PC-9 (cell line): ENCODE measurements at regions of chr7 and their contacts with region 1.

Region 1: DNA sequence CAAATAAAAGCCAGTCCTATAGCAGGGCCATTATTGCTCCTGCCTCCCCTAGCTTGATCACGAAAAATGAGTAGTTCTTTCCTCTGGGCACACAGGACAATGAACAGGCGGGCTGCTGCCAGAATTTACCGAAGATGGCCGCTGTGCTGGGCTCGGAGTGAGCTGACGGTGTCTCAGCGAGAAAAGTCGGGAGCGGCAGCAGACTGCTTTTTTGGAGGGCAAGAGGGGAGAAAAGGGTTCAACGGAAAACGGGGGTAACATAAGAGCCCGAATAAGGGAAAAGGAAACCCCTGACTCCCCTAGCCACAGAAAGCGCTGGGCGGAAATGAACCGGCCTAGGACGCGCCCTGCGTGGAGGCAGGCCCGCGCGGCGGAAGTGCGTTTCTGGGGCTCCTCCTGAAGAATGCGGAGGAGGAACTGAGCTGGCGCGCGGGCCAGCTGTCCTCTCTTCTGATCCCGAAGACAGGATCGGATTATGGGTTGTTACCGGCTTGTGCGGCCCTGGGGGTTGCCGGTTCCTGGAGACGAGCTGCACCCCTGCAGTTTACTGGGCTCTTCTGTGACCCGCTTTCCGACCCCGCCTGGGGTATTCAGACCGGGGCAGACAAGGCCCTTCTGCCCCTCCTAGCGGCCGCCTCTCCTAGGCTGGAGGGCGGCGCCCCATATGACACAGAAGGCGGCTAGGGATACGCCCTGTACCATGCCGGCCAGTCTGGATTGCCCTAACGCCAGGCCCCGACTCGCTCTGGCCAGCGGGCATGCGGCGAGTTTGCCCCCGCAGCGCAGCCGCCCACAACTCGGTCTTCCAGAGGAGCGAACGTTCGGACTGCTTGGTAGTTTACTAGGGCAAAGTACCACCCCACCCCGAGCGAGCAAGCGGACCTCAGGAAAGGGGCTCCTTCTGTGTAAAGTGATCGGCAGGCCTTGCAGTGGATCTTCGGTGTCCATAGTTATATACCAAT is 30.1 kb upstream of the KMT2E start:
- DNase-seq: peak; percentile 76 to 88
- H3K4me3 ChIP-seq: peak overlapping the region; percentile 69
- H3K27ac ChIP-seq: peak overlapping the region; percentile 72
- H3K4me1 ChIP-seq: peaks cover 35% of the 10 kb centered on the region
- H3K27me3 ChIP-seq: no peaks in the 10 kb centered on the region
- CTCF ChIP-seq: peak; percentile 39; the same call in 1 of the 2 replicates

Region 2: DNA sequence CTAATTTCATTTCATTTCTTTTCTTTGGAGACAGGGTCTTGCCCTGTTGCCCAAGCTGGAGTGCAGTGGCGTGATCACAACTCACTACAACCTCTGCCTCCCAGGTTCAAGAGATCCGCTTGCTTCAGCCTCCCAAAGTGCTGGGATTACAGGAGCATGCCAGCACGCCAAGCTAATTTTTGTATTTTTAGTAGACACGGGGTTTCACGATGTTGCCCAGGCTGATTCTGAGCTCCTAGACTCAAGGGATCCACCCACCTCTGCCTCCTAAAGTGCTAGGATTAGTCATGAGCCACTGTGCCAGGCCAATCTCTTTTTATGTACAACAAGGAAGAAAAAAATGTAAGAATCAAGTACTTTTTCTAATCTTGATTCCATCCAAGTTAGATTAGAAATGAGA is 19.4 kb after region 1 on chr7:
- CTCF ChIA-PET with region 1: interaction called, 16 read pairs
- POLR2A ChIA-PET with region 1: interaction called, 7 read pairs
- intact Hi-C with region 1: no loop called
- DNase-seq: peak in 1 of 2 experiments; percentile 34
- H3K4me3 ChIP-seq: no peak overlapping the region
- H3K27ac ChIP-seq: no peak overlapping the region
- H3K4me1 ChIP-seq: peaks cover 32% of the 10 kb centered on the region
- H3K27me3 ChIP-seq: no peaks in the 10 kb centered on the region
- CTCF ChIP-seq: no peak

Region 3: DNA sequence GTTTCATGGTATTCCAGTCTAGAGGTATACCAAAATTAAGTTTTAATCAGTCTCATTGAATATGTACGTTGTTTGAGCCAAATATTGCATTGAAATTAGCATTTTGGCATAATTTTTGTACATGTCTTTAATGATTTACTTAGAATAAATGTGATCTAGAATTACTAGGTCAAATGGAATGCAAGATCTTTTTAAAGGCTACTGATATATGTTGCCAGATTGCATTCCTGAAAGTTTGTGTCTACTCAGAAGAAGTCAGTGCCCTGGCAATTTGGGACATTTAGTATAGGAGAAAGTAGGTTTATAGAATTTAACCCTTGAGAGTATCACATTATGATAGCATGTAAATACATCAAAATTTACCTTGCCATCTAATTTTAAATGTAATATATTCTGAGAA is 62.6 kb after region 1 on chr7:
- CTCF ChIA-PET with region 1: no interaction called
- POLR2A ChIA-PET with region 1: no interaction called
- intact Hi-C with region 1: loop called (anchors 1 kb)
- DNase-seq: peak in 1 of 2 experiments; percentile 78
- H3K4me3 ChIP-seq: no peak overlapping the region
- H3K27ac ChIP-seq: peak overlapping the region; percentile 31
- H3K4me1 ChIP-seq: peaks cover 13% of the 10 kb centered on the region
- H3K27me3 ChIP-seq: no peaks in the 10 kb centered on the region
- CTCF ChIP-seq: no peak

Region 4: GRCh38 chr7:105336009-105336408 is 352.1 kb after region 1 on chr7:
- CTCF ChIA-PET with region 1: interaction called, 3 read pairs
- POLR2A ChIA-PET with region 1: no interaction called
- intact Hi-C with region 1: loop called (anchors 5 kb)
- DNase-seq: no peak
- H3K4me3 ChIP-seq: no peak overlapping the region
- H3K27ac ChIP-seq: no peak overlapping the region
- H3K4me1 ChIP-seq: no peaks in the 10 kb centered on the region
- H3K27me3 ChIP-seq: no peaks in the 10 kb centered on the region
- CTCF ChIP-seq: peak; percentile 71

Region 5: DNA sequence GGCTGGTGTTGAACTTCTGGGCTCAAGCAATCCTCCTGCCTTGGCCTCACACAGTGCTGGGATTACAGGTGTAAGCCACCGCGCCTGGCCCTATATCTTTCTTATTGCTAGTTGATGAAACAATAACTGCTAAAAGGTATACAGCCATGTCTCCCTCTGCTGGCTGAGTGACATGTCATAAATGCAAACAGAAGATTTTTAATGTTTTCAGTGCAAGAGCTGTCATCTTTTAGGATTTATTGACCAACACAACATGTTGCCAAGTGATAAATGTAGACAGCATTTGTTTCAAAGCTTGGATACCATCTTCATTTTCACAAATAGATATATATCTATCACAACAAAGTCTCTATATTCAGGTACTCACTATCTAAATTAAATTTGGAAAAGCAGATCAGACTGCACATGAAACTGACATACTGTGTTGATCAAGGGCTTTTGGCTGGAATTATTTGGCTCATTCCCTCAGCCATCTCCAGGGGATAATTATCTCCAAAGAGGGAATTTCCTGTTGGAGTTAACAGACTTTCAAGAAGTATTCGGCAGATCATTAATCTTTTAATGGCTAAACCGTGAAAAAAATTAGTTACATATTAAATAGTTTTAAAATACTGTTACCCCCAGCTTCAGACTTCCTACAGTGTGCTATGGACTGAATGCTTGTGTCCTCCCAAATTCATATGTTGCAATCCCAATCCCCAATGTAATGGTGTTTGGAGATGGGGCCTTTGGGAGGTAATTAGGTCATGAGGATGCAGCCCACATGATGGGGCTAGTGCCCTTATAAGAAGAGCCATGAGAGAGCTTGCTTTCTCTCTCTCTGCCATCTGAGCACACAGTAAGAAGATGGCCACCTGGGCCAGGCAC is 446.1 kb after region 1 on chr7:
- CTCF ChIA-PET with region 1: no interaction called
- POLR2A ChIA-PET with region 1: no interaction called
- intact Hi-C with region 1: loop called (anchors 2 kb)
- DNase-seq: peak; percentile 39 to 45
- H3K4me3 ChIP-seq: no peak overlapping the region
- H3K27ac ChIP-seq: no peak overlapping the region
- H3K4me1 ChIP-seq: no peaks in the 10 kb centered on the region
- H3K27me3 ChIP-seq: no peaks in the 10 kb centered on the region
- CTCF ChIP-seq: peak; percentile 70

Region 6: DNA sequence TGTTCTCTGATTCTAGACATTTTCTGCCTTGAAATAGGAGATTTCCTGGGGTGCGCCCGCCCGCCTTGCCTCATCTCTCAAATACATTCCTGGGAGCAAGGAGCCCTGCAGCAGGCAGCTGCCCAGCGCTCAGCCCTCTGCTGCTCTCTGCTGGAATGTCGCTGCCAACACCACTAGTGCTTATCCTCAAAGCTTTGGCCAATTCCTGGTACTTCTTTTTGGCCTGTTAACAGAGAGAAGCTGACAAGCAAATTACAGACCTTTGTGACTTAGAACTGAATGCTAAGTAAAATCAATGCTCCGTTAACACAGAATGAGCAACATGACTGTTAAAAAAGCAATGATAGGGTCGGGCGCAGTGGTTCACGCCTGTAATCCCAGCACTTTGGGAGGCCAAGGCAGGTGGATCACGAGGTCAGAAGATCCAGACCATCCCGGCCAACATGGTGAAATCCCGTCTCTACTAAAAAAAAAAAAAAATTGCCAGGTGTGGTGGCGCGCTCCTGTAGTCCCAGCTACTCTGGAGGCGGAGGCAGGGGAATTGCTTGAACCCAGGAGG is 1170.1 kb after region 1 on chr7:
- CTCF ChIA-PET with region 1: no interaction called
- POLR2A ChIA-PET with region 1: no interaction called
- intact Hi-C with region 1: loop called (anchors 5 kb)
- DNase-seq: peak; percentile 68 to 89
- H3K4me3 ChIP-seq: no peak overlapping the region
- H3K27ac ChIP-seq: no peak overlapping the region
- H3K4me1 ChIP-seq: peaks cover 12% of the 10 kb centered on the region
- H3K27me3 ChIP-seq: no peaks in the 10 kb centered on the region
- CTCF ChIP-seq: peak; percentile 94